ENCODE measurements at regions of chr3 and their contacts with region 1.

Region 1: DNA sequence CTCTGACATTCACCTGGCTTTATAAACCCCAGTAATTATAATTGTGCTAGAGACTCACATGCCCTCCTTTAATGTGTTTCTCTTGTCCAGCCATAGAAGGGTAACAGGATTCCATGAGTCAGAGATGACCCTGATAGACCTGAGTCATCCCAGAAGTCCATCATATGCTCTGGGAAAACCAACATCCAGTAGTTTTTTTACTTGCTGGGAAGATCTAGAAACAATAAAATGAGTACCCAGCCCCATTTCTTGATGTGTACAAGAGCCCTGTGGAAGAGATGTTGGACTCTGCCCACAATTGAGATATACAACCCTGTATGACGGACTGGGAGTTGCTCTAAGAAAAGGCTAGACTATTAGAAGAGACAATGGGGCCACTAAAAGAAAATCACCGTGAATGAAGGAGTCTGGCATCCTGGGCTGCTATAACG is 22.4 kb upstream of the THUMPD3 start:
- DNase-seq: no peak
- H3K4me3 ChIP-seq: no peak overlapping the region
- H3K27ac ChIP-seq: peak overlapping the region; percentile 65
- H3K4me1 ChIP-seq: peaks cover 8% of the 10 kb centered on the region
- H3K27me3 ChIP-seq: no peaks in the 10 kb centered on the region
- CTCF ChIP-seq: no peak
- POLR2A ChIP-seq: no peak

Region 2: GRCh38 chr3:9224490-9224889 is 116.0 kb before region 1 on chr3:
- intact Hi-C with region 1: no loop called
- DNase-seq: no peak
- H3K4me3 ChIP-seq: no peak overlapping the region
- H3K27ac ChIP-seq: no peak overlapping the region
- H3K4me1 ChIP-seq: peaks cover 13% of the 10 kb centered on the region
- H3K27me3 ChIP-seq: no peaks in the 10 kb centered on the region
- CTCF ChIP-seq: no peak
- POLR2A ChIP-seq: no peak

Region 3: GRCh38 chr3:9316881-9317361 is 23.6 kb before region 1 on chr3:
- intact Hi-C with region 1: no loop called
- DNase-seq: no peak
- H3K4me3 ChIP-seq: peak overlapping the region; percentile 26 to 33
- H3K27ac ChIP-seq: peak overlapping the region; percentile 64
- H3K4me1 ChIP-seq: peaks cover 11% of the 10 kb centered on the region
- H3K27me3 ChIP-seq: no peaks in the 10 kb centered on the region
- CTCF ChIP-seq: no peak
- POLR2A ChIP-seq: no peak

Region 4: GRCh38 chr3:10744098-10744465 is 1403.6 kb after region 1 on chr3:
- intact Hi-C with region 1: loop called (anchors 5 kb)
- DNase-seq: no peak
- H3K4me3 ChIP-seq: no peak overlapping the region
- H3K27ac ChIP-seq: no peak overlapping the region
- H3K4me1 ChIP-seq: peaks cover 2% of the 10 kb centered on the region
- H3K27me3 ChIP-seq: no peaks in the 10 kb centered on the region
- CTCF ChIP-seq: no peak
- POLR2A ChIP-seq: no peak

Measured in vagina (tissue), 2 donors.